ENCODE measurements at regions of chr2 and their contacts with region 1.

Region 1: DNA sequence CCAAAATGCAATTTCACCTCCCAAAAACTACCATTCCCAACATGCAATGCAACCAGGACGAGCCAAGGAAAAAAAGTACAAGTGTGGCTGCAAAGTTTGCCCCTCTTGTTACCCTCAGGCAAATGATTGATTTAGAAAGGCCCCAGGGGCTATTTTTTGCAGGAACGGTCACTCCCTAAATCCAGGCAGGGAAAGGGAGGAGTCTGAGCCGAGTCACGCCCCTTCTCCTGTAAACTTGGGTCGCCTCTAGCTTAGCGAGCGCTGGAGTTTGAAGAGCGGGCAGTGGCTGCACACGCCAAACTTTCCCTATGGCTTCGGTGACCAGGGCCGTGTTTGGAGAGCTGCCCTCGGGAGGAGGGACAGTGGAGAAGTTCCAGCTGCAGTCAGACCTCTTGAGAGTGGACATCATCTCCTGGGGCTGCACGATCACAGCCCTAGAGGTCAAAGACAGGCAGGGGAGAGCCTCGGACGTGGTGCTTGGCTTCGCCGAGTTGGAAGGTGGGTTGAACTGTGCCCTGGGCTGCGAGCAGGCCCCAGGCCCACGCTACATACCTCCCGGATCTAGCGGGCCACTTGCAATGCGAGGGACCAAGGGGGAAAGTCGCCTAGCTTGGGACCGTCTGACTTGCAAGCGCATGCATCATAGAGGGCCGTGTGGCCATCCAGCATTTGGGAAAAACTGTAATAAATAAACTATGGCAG is at the start of gene GALM:
- DNase-seq: peak; percentile 8 to 57 (median 47)
- ATAC-seq: peak; percentile 39
- H3K4me3 ChIP-seq: peak within 1 kb of the TSS; percentile 76
- H3K4me3 Mint-ChIP-seq: peak within 1 kb of the TSS; percentile 85 to 97 (median 90)
- H3K27ac ChIP-seq: peak within 1 kb of the TSS; percentile 75
- H3K27ac Mint-ChIP-seq: peak within 1 kb of the TSS; percentile 82 to 96 (median 92)
- H3K4me1 ChIP-seq: peaks cover 9 to 43% of the 10 kb centered on the region in 2 donors
- H3K4me1 Mint-ChIP-seq: peaks cover 30 to 72% (median 53%) of the 10 kb centered on the region in 7 donors
- H3K27me3 ChIP-seq: no peaks in the 10 kb centered on the region
- H3K27me3 Mint-ChIP-seq: no peaks in the 10 kb centered on the region
- total RNA-seq, gene GALM: 4.3 to 52.5 (median 14.4) TPM

Region 2: DNA sequence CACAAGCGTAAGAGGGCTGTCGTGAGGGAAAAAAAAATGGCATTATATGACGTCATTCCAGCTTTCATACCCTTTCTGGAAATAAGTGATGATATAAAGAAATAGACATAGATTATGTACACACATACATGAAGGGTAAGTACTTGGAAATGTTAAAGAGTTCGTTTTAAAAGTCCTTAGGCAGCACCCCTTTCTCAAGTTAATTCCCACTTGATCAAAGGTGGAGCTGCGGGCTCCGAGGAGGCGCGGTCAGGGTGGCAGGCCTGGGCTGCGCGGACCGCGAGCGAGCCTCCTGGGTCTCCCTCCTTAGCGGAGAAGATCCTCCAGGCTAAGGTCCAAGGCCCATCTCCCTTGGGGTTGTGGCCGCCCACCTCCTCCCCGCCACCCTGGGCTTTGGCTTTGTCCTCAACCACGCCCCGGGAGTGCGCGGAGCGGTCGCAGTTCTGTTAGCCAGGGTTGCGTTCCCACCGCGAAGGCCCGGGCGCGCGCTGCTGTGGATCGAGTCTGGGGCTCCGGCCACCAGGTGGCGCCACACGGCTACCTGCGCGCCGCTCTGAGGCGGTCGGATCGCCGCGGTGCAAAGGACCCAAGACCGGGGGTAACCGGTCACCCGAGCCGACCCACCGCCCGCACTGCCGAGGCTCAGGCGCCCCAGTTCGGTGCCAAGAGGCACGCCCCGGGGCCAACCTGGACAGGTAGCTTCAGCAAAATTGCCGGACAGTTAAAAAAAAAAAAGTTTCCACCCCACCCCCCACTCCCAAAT is 130.1 kb before region 1 on chr2:
- CTCF ChIA-PET with region 1: interaction called, 3 read pairs
- POLR2A ChIA-PET with region 1: no interaction called
- intact Hi-C with region 1: loop called in 1 of 2 experiments (anchors 5 kb)
- DNase-seq: peak; percentile 48 to 88 (median 72)
- ATAC-seq: peak; percentile 95
- H3K4me3 ChIP-seq: peak overlapping the region; percentile 40
- H3K4me3 Mint-ChIP-seq: peak overlapping the region; percentile 36 to 72 (median 56)
- H3K27ac ChIP-seq: no peak overlapping the region
- H3K27ac Mint-ChIP-seq: peak overlapping the region in 1 of 9 donors; percentile 59
- H3K4me1 ChIP-seq: peaks cover 0 to 5% of the 10 kb centered on the region in 2 donors
- H3K4me1 Mint-ChIP-seq: peaks cover 0 to 6% (median 3%) of the 10 kb centered on the region in 7 donors
- H3K27me3 ChIP-seq: peaks cover 0 to 4% of the 10 kb centered on the region in 2 donors
- H3K27me3 Mint-ChIP-seq: peaks cover 4 to 37% (median 8%) of the 10 kb centered on the region in 5 donors

Region 3: DNA sequence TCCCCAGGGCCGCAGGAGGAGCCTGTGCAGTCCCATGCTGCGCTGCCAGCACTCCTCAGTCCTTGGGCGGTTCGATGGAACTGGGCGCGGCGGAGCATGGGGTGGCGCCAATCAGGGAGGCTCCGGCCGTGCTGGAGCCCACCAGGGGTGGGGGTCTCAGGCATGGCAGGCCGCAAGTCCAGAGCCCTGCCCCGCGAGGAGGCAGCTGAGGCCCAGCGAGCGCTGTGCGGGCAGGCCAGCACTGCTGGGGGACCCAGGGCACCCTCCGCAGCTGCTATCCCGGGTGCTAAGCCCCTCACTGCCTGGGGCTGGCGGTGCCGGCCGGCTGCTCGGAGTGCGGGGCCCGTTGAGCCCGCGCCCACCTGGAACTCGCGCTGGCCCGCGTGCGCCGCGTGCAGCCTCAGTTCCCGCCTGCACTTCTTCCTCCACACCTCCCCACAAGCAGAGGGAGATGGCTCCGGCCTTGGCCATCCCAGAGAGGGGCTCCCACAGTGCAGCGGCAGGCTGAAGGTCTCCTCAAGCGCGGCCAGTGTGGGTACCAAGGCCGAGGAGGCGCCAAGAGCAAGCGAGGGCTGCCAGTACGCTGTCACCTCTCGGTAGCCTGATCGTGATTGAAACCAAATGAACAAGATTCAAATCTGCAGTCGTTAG is 22.9 kb before region 1 on chr2:
- CTCF ChIA-PET with region 1: no interaction called
- POLR2A ChIA-PET with region 1: interaction called, 3 read pairs
- intact Hi-C with region 1: loop called (anchors 1 kb)
- DNase-seq: no peak
- ATAC-seq: no peak
- H3K4me3 ChIP-seq: no peak overlapping the region
- H3K4me3 Mint-ChIP-seq: peak overlapping the region in 6 of 10 donors; percentile 74 to 81 (median 76)
- H3K27ac ChIP-seq: no peak overlapping the region
- H3K27ac Mint-ChIP-seq: peak overlapping the region; percentile 85 to 94 (median 88)
- H3K4me1 ChIP-seq: peaks cover 6 to 8% of the 10 kb centered on the region in 2 donors
- H3K4me1 Mint-ChIP-seq: peaks cover 12 to 45% (median 18%) of the 10 kb centered on the region in 7 donors
- H3K27me3 ChIP-seq: no peaks in the 10 kb centered on the region
- H3K27me3 Mint-ChIP-seq: no peaks in the 10 kb centered on the region

Region 4: DNA sequence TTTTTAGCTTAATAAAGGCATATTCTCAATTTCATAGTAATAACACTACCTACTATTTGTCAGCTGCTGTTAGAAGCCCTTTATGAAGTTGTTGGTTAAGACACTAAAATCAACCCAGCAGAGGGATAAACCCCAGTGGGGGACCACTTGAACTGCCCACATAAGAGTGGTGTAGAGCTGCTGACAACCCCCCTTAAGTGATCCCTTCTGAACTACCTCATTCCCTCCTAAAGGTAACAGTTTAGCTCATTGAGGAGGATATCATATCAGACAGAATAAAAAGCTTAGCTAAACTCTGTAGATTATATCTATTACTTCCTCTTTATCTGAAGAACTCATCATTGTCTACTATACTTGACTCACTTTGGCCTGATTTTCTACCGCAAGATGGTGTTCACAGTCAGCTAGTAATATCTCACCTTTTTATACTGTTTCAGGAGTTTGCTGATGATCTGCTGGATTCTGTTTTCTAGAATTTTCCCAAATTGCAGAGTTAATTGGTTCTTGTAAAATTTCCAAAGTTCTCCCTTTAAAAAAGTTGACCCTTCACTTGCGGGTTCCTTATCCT is 16.1 kb after region 1 on chr2:
- CTCF ChIA-PET with region 1: no interaction called
- POLR2A ChIA-PET with region 1: interaction called, 14 read pairs
- intact Hi-C with region 1: loop called (anchors 1 kb)
- DNase-seq: peak in 1 of 9 donors; percentile 18
- ATAC-seq: peak; percentile 83
- H3K4me3 ChIP-seq: peak overlapping the region; percentile 17
- H3K4me3 Mint-ChIP-seq: peak overlapping the region in 7 of 10 donors; percentile 12 to 55 (median 27)
- H3K27ac ChIP-seq: peak overlapping the region; percentile 4
- H3K27ac Mint-ChIP-seq: peak overlapping the region; percentile 11 to 82 (median 59)
- H3K4me1 ChIP-seq: peaks cover 14 to 51% of the 10 kb centered on the region in 2 donors
- H3K4me1 Mint-ChIP-seq: peaks cover 8 to 50% (median 32%) of the 10 kb centered on the region in 7 donors
- H3K27me3 ChIP-seq: no peaks in the 10 kb centered on the region
- H3K27me3 Mint-ChIP-seq: no peaks in the 10 kb centered on the region

Region 5: DNA sequence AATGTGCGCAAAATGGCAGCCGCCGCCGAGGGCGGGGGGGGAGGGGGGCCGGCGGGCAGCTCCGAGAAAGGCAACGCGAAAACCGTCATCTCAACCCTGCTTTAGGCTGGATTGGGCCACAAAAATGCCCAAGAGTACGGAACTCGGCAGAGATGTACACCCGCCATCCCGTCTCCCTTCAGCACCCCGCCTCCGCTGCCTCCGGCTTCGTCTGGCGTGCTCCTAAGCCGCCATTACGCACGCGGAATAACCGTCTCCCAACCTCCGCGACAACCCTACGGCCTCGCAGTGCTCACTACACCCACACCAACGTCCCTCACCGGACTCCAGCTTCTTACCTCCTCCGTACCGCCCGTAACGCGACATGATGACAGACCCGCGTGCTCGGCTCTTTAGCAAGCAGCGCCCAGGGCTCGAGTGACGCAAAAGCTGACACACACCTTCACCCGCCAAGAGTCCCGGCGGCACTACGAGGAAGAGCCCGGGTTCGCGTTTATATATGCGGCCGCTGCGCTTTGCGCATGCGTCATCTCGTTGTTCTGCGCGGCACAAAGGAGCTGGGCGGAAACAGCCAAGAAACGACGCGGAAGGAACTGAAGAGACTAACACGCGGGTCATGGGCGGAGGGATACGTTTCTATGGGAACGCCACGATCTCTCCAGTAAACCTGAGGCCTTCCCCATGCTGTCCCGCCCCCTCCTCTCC is 85.0 kb after region 1 on chr2 and contains the start of gene SRSF7:
- CTCF ChIA-PET with region 1: no interaction called
- POLR2A ChIA-PET with region 1: interaction called, 30 read pairs
- intact Hi-C with region 1: loop called (anchors 1 to 2 kb)
- DNase-seq: peak; percentile 95 to 98 (median 97)
- ATAC-seq: peak; percentile 87
- H3K4me3 ChIP-seq: peak within 1 kb of the TSS; percentile 96
- H3K4me3 Mint-ChIP-seq: peak within 1 kb of the TSS; percentile 95 to 100 (median 99)
- H3K27ac ChIP-seq: peak within 1 kb of the TSS; percentile 95
- H3K27ac Mint-ChIP-seq: peak within 1 kb of the TSS; percentile 98 to 100 (median 100)
- H3K4me1 ChIP-seq: peaks cover 31 to 41% of the 10 kb centered on the region in 2 donors
- H3K4me1 Mint-ChIP-seq: peaks cover 40 to 72% (median 58%) of the 10 kb centered on the region in 7 donors
- H3K27me3 ChIP-seq: no peaks in the 10 kb centered on the region
- H3K27me3 Mint-ChIP-seq: peaks cover 0 to 5% (median 0%) of the 10 kb centered on the region in 5 donors
- total RNA-seq, gene SRSF7: 259 to 503 (median 310) TPM

Region 6: GRCh38 chr2:38959938-38960608 is 294.1 kb after region 1 on chr2:
- CTCF ChIA-PET with region 1: no interaction called
- POLR2A ChIA-PET with region 1: no interaction called
- intact Hi-C with region 1: no loop called
- DNase-seq: peak; percentile 30 to 71 (median 47)
- ATAC-seq: peak; percentile 98
- H3K4me3 ChIP-seq: peak overlapping the region; percentile 17
- H3K4me3 Mint-ChIP-seq: peak overlapping the region in 9 of 10 donors; percentile 21 to 76 (median 58)
- H3K27ac ChIP-seq: no peak overlapping the region
- H3K27ac Mint-ChIP-seq: no peak overlapping the region
- H3K4me1 ChIP-seq: no peaks in the 10 kb centered on the region
- H3K4me1 Mint-ChIP-seq: peaks cover 0 to 10% (median 4%) of the 10 kb centered on the region in 7 donors
- H3K27me3 ChIP-seq: no peaks in the 10 kb centered on the region
- H3K27me3 Mint-ChIP-seq: peaks cover 24 to 68% (median 30%) of the 10 kb centered on the region in 5 donors

Region 7: DNA sequence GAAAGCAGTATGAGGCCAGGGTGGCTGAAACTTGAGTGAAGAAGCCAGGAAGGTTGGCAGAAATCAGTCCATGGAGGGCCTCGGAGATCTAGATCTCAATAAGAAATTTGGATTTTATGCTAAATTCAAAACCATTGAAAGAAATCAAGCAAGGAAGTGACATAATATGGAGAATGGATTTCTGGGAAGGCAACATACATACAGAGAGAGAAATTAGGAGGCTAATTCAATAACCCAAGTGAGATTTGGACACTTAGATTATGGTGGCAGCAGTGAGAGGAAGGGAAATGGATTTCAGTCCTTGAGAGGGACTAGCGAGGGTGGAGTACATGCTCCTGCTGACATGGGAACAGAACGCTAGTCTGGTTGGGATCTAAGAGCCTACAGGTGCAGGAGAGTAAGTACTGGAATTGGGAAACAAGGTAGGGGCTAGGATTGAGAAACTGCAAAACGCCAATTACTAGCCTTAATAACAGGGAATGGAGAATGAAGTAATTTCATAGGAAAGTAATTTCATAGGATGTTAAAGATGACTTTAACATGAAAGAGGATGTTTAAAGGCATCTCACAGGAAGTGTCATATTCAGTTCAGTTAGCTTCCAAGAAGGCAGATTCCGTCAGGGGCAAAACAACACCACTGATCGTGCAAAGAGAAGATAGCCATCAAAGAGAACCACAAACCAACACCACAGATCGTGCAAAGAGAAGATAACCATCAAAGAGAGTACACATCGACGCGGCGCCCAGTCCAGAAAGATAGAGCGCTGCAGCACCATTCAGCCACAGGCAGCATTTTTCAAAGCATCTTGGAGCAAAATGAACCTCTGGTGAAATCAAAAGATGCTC is 550.6 kb after region 1 on chr2:
- CTCF ChIA-PET with region 1: no interaction called
- POLR2A ChIA-PET with region 1: no interaction called
- intact Hi-C with region 1: loop called in 1 of 2 experiments (anchors 5 kb)
- DNase-seq: peak; percentile 18 to 92 (median 81)
- ATAC-seq: peak; percentile 94
- H3K4me3 ChIP-seq: peak overlapping the region; percentile 20
- H3K4me3 Mint-ChIP-seq: peak overlapping the region; percentile 18 to 84 (median 60)
- H3K27ac ChIP-seq: peak overlapping the region; percentile 1
- H3K27ac Mint-ChIP-seq: peak overlapping the region; percentile 32 to 97 (median 75)
- H3K4me1 ChIP-seq: peaks cover 29 to 38% of the 10 kb centered on the region in 2 donors
- H3K4me1 Mint-ChIP-seq: peaks cover 26 to 72% (median 38%) of the 10 kb centered on the region in 7 donors
- H3K27me3 ChIP-seq: no peaks in the 10 kb centered on the region
- H3K27me3 Mint-ChIP-seq: peaks cover 0 to 2% (median 0%) of the 10 kb centered on the region in 5 donors

Measured in naive thymus-derived CD4-positive, alpha-beta T cell (primary cell).